Activated CD4-positive, alpha-beta T cell treated with anti-CD3 and anti-CD28 coated beads for 36 hours (primary cell): ENCODE measurements at regions of chr7 and their contacts with region 1.

Region 1: GRCh38 chr7:8042796-8043535 is 74.4 kb downstream of the GLCCI1 start:
- DNase-seq: no peak
- ATAC-seq: no peak
- H3K4me3 Mint-ChIP-seq: no peak overlapping the region
- H3K27ac Mint-ChIP-seq: peak overlapping the region; percentile 60
- H3K4me1 Mint-ChIP-seq: peaks cover 67% of the 10 kb centered on the region
- H3K27me3 Mint-ChIP-seq: no peaks in the 10 kb centered on the region

Region 2: GRCh38 chr7:7772397-7772821 is 270.6 kb before region 1 on chr7:
- CTCF ChIA-PET with region 1: no interaction called
- POLR2A ChIA-PET with region 1: no interaction called
- intact Hi-C with region 1: loop called in 1 of 2 experiments (anchors 5 kb)
- DNase-seq: peak; percentile 51
- ATAC-seq: peak; percentile 96
- H3K4me3 Mint-ChIP-seq: peak overlapping the region; percentile 43
- H3K27ac Mint-ChIP-seq: peak overlapping the region; percentile 69
- H3K4me1 Mint-ChIP-seq: peaks cover 28% of the 10 kb centered on the region
- H3K27me3 Mint-ChIP-seq: no peaks in the 10 kb centered on the region

Region 3: DNA sequence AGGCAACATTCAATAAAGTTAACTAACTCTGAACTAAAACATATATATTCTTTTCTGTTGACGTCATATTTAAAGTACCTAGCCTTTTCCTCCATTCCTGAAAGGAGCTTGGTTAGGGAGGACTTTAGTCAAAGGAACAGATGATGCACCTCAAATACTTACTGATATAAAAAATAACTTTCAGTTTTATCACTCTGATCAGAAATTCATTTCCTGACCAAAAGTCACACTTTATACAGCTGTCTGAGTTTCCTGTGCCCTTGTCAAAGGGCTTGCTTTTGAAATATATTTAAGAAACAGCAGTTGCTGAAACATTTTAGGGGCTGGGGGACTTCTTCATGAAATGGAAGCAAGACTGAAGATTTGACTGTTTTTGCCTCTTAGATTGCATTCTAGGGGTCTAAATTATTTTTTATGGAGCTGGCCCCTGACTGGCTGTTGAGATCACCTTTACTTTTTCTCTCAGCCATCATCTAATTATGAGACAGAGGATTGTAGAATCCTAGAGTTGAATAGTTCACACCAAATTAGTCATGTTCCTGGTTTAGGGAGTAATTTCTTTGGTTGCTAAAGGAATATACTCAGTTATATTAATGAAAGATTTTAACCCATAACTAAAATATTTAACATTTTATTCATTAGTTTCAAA is 27.7 kb before region 1 on chr7:
- CTCF ChIA-PET with region 1: interaction called, 6 read pairs
- POLR2A ChIA-PET with region 1: no interaction called
- intact Hi-C with region 1: loop called in 1 of 2 experiments (anchors 2 kb)
- DNase-seq: no peak
- ATAC-seq: peak; percentile 89
- H3K4me3 Mint-ChIP-seq: no peak overlapping the region
- H3K27ac Mint-ChIP-seq: peak overlapping the region; percentile 2
- H3K4me1 Mint-ChIP-seq: peaks cover 46% of the 10 kb centered on the region
- H3K27me3 Mint-ChIP-seq: no peaks in the 10 kb centered on the region

Region 4: DNA sequence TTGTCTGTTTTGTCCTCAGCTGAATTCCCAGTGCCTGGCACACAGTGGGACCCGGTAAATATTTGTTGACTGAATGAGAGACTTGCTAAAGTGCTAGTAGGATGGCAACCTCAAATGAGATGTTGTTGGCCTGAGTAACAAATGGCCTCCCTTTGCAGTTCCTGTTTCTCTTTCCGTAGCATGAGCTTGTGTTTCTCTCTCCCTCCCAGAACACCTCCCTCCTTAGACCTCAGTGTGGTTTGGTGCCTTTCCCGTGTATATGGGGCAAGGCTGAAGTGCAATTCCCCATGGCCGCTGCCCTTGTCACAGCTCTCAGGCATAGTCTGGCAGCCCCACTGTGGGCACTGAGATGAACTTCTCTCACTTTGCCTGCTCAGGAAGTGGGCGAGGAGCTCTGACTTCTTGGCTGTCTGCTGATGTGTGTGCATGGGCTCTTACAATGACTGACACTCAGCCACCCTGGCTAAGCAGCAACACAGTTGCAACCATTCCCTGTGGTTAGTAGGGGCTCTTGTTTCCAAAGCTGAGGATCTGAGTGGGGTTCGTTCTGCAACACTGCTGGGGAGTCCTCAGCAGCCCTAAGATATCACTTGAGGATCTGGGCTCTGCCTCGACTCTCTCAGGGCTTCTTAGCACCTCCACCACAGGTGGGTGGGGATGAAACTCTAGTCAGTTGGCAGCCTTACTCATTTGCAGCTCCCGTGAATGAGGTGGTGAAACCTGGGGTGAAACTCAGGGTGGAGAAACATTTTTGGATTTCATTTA is 82.9 kb after region 1 on chr7:
- CTCF ChIA-PET with region 1: no interaction called
- POLR2A ChIA-PET with region 1: interaction called, 4 read pairs
- intact Hi-C with region 1: loop called (anchors 2 kb)
- DNase-seq: peak; percentile 88
- ATAC-seq: peak; percentile 93
- H3K4me3 Mint-ChIP-seq: peak overlapping the region; percentile 62
- H3K27ac Mint-ChIP-seq: peak overlapping the region; percentile 95
- H3K4me1 Mint-ChIP-seq: peaks cover 81% of the 10 kb centered on the region
- H3K27me3 Mint-ChIP-seq: peaks cover 5% of the 10 kb centered on the region

Region 5: DNA sequence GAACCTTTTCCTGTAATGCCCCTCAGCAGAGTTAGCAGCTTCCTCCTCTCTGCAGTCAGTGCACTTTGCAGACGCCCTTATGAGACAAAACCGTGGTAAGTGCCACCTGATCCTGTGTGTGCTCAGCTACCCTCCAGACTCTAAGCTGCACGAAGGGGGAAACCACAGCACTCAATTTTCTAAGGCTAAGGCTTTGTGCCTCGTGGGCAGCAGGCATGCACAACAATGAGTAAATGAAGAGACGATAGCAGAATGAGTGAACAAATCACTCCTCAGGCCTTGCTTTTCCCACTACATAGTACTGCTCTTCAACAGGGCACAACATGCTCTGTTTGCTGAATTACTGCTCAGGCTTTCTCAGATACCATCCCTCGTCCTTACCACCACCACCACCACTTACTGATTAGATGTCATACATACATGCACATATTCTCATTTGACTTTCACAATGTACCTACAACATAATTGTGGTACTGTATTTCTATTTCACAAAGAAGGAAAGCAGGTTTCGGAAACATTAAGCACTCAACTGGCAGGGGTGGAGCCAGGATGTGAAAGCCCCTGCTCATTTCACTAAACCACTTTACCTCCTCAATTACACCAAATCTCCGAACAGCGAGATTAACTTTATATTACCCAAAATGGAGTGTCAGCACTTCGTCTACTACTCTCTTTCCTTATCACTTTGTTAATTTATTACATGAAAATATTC is 133.6 kb after region 1 on chr7:
- CTCF ChIA-PET with region 1: no interaction called
- POLR2A ChIA-PET with region 1: no interaction called
- intact Hi-C with region 1: loop called in 1 of 2 experiments (anchors 2 kb)
- DNase-seq: peak; percentile 74
- ATAC-seq: peak; percentile 85
- H3K4me3 Mint-ChIP-seq: peak overlapping the region; percentile 63
- H3K27ac Mint-ChIP-seq: peak overlapping the region; percentile 95
- H3K4me1 Mint-ChIP-seq: peaks cover 42% of the 10 kb centered on the region
- H3K27me3 Mint-ChIP-seq: no peaks in the 10 kb centered on the region

Region 6: GRCh38 chr7:8190119-8190895 is 147.3 kb after region 1 on chr7:
- CTCF ChIA-PET with region 1: interaction called, 4 read pairs
- POLR2A ChIA-PET with region 1: no interaction called
- intact Hi-C with region 1: loop called in 1 of 2 experiments (anchors 5 kb)
- DNase-seq: peak; percentile 73
- ATAC-seq: peak; percentile 86
- H3K4me3 Mint-ChIP-seq: no peak overlapping the region
- H3K27ac Mint-ChIP-seq: no peak overlapping the region
- H3K4me1 Mint-ChIP-seq: peaks cover 8% of the 10 kb centered on the region
- H3K27me3 Mint-ChIP-seq: no peaks in the 10 kb centered on the region